Sciatic nerve (tissue), 2 donors: ENCODE measurements at regions of chr3 and their contacts with region 1.

Region 1: DNA sequence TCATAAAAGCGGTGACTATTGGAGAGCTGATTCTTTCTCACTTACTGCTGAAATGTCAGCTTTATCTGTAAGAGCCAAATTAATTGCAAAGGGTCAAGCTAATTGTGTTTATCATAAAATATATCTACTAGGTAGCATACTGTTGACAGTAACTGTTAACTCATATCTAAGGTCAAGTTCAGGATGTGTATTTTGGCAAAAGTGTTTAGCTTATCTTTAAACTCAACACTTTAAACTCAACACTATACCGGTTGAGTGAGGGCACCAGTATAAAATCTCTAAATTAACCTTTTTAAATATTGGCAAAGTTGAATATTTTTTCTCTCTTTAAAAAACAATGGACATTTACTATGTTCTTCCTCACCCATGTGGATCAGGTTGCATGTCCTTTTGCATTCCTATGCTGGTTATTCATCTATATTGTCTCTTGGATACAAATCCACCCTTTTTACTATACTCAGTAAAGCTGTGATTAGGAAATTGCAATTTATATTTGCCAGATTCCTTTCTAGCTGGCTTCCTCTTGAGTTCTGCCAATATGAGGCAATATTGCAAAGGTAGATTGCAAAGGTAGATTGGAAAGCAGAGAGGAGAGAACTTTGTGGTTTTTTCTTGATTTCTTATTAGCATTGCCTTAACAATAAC is 344.6 kb upstream of the DCBLD2 start:
- DNase-seq: no peak
- ATAC-seq: no peak

Region 2: DNA sequence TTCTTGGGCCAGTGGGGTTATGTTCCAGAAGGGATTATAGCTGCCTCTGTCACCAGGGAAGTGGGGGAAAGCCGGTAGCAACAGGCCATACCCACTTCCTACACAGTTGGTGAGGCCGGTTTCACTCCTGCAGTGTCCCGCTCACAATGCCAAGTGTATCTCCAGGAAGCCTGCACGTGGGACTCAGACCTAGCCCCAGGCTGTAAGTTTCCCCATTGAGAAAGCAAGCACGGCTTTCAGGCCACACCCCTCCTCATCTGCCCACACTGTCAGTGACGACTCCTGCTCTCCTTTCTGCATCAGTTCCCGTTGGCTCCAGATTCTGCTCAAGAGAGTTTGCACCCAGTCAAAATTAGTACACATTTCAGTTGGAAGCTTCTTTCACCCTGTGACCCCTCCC is 601.1 kb before region 1 on chr3:
- intact Hi-C with region 1: loop called (anchors 10 kb)
- DNase-seq: no peak
- ATAC-seq: peak; percentile 57

Region 3: GRCh38 chr3:98722389-98722788 is 523.7 kb before region 1 on chr3:
- intact Hi-C with region 1: no loop called
- DNase-seq: no peak
- ATAC-seq: no peak

Region 4: DNA sequence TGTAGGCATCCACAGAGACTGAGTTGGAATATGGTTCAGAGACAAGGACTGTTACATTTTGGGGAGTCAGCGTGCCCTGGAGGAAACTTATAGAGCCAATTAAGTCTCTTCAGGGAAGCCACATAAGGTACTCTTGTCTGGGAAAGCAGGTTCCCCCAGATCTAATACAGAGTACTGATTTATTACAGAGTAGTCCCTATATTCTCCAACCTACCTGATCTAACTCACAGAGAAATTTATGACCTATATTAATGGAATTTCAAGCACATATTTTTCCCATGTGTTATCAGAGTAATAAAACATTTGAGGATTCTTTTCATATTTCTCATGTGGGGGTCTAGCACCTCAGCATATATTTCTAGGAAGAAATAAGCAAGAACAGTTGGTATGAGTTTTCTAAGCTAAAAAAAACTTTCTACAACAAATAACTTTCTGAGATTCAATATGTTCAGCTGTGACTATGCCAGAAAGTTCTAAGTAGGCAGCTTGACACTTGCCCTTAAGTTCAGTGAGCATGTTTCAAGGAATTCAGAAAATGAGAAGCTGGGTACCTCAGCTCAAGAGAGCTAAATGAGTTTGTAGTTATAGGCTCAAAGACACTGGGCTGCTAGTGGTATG is 317.0 kb after region 1 on chr3:
- intact Hi-C with region 1: no loop called
- DNase-seq: no peak
- ATAC-seq: no peak